GM12878 (cell line): ENCODE measurements at regions of chr2 and their contacts with region 1.

Region 1: GRCh38 chr2:170155022-170155722 is 22.8 kb upstream of the MYO3B start:
- DNase-seq: no peak
- ATAC-seq: peak; percentile 73
- H3K4me3 ChIP-seq: no peak overlapping the region; the same call in 1 of the 2 replicates
- H3K27ac ChIP-seq: no peak overlapping the region
- H3K4me1 ChIP-seq: peaks cover 54% of the 10 kb centered on the region
- H3K27me3 ChIP-seq: no peaks in the 10 kb centered on the region
- CTCF ChIP-seq: no peak
- EP300 ChIP-seq: peak in 1 of 2 experiments; percentile 75; a peak in 1 of 4 replicates
- POLR2A ChIP-seq: no peak
- RAD21 ChIP-seq: no peak

Region 2: DNA sequence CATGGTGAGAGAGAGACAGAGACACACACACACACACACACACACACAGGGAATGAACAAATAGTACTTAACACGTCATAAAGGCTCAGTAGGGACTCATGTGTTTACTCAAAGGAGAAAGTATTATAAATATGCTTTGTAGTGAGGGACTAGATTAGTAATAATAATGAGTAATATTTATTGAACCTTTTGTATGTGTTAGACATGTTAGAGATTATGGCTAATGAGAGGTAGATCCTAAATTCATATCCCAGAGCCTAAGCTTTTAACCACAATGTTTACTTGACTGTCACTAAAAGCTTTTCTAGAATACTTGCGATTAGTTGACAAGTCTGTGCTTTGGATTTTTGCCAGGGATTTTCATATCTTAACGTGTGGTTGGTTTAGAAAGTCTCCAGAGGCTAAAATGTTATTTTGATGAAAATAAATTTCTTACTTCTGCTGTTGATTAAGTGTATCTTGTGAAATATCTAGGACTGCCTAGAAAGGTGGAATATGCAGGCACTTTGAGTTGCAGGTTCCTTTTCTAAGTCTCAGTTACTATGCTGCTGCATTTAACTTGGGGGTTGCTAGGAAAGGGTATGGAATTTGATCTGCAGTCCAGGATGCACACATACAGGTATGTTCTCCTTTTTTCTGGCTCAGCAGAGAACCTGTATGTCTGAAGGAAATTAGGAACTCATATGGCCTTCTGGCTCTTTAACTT is 263.4 kb before region 1 on chr2:
- CTCF ChIA-PET with region 1: no interaction called
- POLR2A ChIA-PET with region 1: no interaction called
- RAD21 ChIA-PET with region 1: no interaction called
- SMC1A ChIA-PET with region 1: no interaction called
- in situ Hi-C with region 1: no loop called
- intact Hi-C with region 1: no loop called
- DNase-seq: no peak
- ATAC-seq: no peak
- H3K4me3 ChIP-seq: no peak overlapping the region
- H3K27ac ChIP-seq: no peak overlapping the region
- H3K4me1 ChIP-seq: no peaks in the 10 kb centered on the region
- H3K27me3 ChIP-seq: no peaks in the 10 kb centered on the region
- CTCF ChIP-seq: no peak
- EP300 ChIP-seq: no peak
- POLR2A ChIP-seq: no peak
- RAD21 ChIP-seq: no peak

Region 3: GRCh38 chr2:169933124-169933711 is 222.0 kb before region 1 on chr2:
- CTCF ChIA-PET with region 1: interaction called, 4 read pairs
- POLR2A ChIA-PET with region 1: no interaction called
- RAD21 ChIA-PET with region 1: no interaction called
- SMC1A ChIA-PET with region 1: interaction called, 3 read pairs
- in situ Hi-C with region 1: no loop called
- intact Hi-C with region 1: loop called (anchors 5 kb)
- DNase-seq: no peak
- ATAC-seq: peak; percentile 82
- H3K4me3 ChIP-seq: no peak overlapping the region
- H3K27ac ChIP-seq: no peak overlapping the region
- H3K4me1 ChIP-seq: no peaks in the 10 kb centered on the region
- H3K27me3 ChIP-seq: no peaks in the 10 kb centered on the region
- CTCF ChIP-seq: peak; percentile 67 to 79 (median 70)
- EP300 ChIP-seq: no peak
- POLR2A ChIP-seq: no peak
- RAD21 ChIP-seq: peak; percentile 92

Region 4: GRCh38 chr2:170139276-170139967 is 15.8 kb before region 1 on chr2:
- CTCF ChIA-PET with region 1: interaction called, 3 read pairs
- POLR2A ChIA-PET with region 1: interaction called, 28 read pairs
- RAD21 ChIA-PET with region 1: interaction called, 36 read pairs
- SMC1A ChIA-PET with region 1: interaction called, 162 read pairs
- in situ Hi-C with region 1: no loop called
- intact Hi-C with region 1: no loop called
- DNase-seq: no peak
- ATAC-seq: peak; percentile 83
- H3K4me3 ChIP-seq: no peak overlapping the region
- H3K27ac ChIP-seq: no peak overlapping the region
- H3K4me1 ChIP-seq: peaks cover 25% of the 10 kb centered on the region
- H3K27me3 ChIP-seq: no peaks in the 10 kb centered on the region
- CTCF ChIP-seq: no peak
- EP300 ChIP-seq: no peak
- POLR2A ChIP-seq: no peak
- RAD21 ChIP-seq: no peak

Region 5: DNA sequence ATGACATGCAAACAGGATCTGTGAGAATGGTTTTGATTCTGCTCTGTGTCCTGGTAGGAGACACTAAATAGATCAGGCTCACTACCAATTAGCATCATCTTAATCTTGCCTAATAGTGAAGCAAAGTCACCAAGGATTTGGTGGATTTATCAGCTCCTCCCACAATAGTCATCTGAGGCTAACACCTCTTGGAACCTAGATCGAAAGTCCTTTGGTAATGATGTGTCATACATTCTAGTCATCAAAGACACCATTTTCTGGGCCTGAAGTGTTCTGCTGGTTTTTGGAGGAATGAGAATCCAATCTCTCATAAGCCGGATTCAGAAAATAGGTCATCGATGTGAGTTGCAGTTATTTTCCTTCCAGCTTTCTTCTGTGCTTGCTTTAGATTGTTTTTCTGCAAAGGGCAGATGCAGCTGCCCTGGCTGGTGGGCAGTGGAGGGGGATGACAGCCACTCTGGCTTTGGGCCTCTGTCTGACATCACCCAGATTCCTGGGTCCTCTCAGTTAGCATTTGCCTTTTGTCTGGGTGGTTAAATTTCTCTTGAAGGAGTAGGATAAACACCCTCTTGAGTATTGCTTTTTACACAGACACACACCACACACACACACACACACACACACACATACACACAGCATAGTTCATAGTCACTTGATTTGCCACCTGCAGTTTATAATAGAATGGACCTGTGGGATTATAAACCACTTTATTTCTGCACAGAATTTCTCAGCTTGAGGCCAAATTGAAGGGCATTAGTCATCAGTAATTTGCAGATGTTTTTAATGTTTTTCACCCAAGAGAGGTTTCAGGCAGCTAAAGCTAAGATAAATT is 23.0 kb after region 1 on chr2 and contains the start of gene MYO3B:
- CTCF ChIA-PET with region 1: interaction called, 38 read pairs
- POLR2A ChIA-PET with region 1: interaction called, 112 read pairs
- RAD21 ChIA-PET with region 1: interaction called, 124 read pairs
- SMC1A ChIA-PET with region 1: interaction called, 291 read pairs
- in situ Hi-C with region 1: no loop called
- intact Hi-C with region 1: no loop called
- DNase-seq: no peak
- ATAC-seq: peak; percentile 69
- H3K4me3 ChIP-seq: peak within 1 kb of the TSS; percentile 13; the same call in 1 of the 2 replicates
- H3K27ac ChIP-seq: peak within 1 kb of the TSS; percentile 80
- H3K4me1 ChIP-seq: peaks cover 38% of the 10 kb centered on the region
- H3K27me3 ChIP-seq: no peaks in the 10 kb centered on the region
- CTCF ChIP-seq: no peak
- EP300 ChIP-seq: peak; percentile 33 to 55; a peak in 2 of 4 replicates
- POLR2A ChIP-seq: no peak
- RAD21 ChIP-seq: no peak
- polyA plus RNA-seq, gene MYO3B: 1.1 to 1.2 TPM

Region 6: GRCh38 chr2:170227507-170227947 is 72.4 kb after region 1 on chr2:
- CTCF ChIA-PET with region 1: no interaction called
- POLR2A ChIA-PET with region 1: interaction called, 5 read pairs
- RAD21 ChIA-PET with region 1: interaction called, 11 read pairs
- SMC1A ChIA-PET with region 1: interaction called, 29 read pairs
- in situ Hi-C with region 1: no loop called
- intact Hi-C with region 1: loop called (anchors 5 kb)
- DNase-seq: peak; percentile 79
- ATAC-seq: peak; percentile 91
- H3K4me3 ChIP-seq: no peak overlapping the region
- H3K27ac ChIP-seq: peak overlapping the region; percentile 52
- H3K4me1 ChIP-seq: peaks cover 19% of the 10 kb centered on the region
- H3K27me3 ChIP-seq: no peaks in the 10 kb centered on the region
- CTCF ChIP-seq: no peak
- EP300 ChIP-seq: 0 out of 4 replicates have a peak, but pooled peaks of 1 of the 2 experiments have one; percentile 46
- POLR2A ChIP-seq: no peak
- RAD21 ChIP-seq: no peak